ENCODE measurements at regions of chr9 and their contacts with region 1.

Region 1: DNA sequence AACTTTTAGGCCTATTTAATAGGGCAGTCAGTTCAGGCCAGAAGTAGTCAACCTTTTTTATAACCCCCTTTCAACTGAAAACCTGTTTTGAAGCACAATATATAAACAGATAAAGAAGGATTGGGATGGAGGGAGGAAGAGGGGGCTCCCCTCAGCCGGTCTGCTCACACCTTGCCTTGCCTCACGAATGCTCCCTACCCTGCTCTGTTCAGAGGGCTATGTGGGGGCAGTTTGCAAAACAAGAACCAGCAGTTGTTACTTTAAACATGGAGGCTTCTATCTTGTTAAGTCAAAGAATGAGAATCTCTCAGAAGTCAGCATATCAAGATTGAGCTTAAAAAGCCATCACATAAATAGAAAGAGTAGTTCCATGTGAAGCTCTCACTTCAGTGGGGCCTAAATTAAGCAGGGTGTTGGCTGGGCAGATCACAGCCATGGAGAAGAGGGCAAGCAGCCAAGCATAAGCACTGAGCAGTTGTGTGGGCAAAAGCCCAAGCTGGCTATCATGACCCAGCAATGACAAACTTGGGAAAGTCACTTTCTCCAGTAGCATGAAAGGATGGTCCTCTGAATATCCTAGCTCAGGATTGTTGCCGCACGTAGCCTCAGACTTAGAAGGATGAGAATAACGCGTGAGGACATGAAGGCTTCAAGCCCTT is 70.6 kb downstream of the ALDH1A1 start:
- DNase-seq: no peak
- ATAC-seq: no peak
- H3K4me3 ChIP-seq: no peak overlapping the region
- H3K4me3 Mint-ChIP-seq: no peak overlapping the region
- H3K27ac ChIP-seq: no peak overlapping the region
- H3K27ac Mint-ChIP-seq: no peak overlapping the region
- H3K4me1 ChIP-seq: no peaks in the 10 kb centered on the region
- H3K4me1 Mint-ChIP-seq: no peaks in the 10 kb centered on the region
- H3K27me3 ChIP-seq: no peaks in the 10 kb centered on the region
- H3K27me3 Mint-ChIP-seq: no peaks in the 10 kb centered on the region
- CTCF ChIP-seq: no peak

Region 2: DNA sequence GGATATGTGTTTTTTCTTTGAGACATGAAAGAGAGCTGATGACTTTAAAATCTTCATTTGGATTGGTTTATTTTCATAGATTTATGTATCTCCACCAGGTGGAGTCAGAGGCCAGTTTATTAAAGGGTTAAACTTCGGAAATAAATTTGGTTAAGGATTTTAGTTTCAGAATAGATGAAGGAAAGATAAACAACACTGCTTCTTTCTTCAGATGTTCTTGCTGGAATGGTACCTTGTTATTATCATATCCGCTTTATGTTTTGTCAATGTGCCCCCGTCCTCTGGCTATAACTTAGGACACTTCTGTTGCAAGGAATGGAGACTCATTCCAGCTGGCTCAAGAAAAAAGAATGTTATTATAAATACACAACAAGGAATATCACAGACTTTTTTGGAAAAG is 10.6 kb before region 1 on chr9:
- intact Hi-C with region 1: loop called (anchors 1 kb)
- DNase-seq: no peak
- ATAC-seq: no peak
- H3K4me3 ChIP-seq: no peak overlapping the region
- H3K4me3 Mint-ChIP-seq: no peak overlapping the region
- H3K27ac ChIP-seq: no peak overlapping the region
- H3K27ac Mint-ChIP-seq: no peak overlapping the region
- H3K4me1 ChIP-seq: no peaks in the 10 kb centered on the region
- H3K4me1 Mint-ChIP-seq: peaks cover 0 to under 1% of the 10 kb centered on the region in 2 donors
- H3K27me3 ChIP-seq: no peaks in the 10 kb centered on the region
- H3K27me3 Mint-ChIP-seq: peaks cover 6 to 21% of the 10 kb centered on the region in 2 donors
- CTCF ChIP-seq: no peak

Region 3: DNA sequence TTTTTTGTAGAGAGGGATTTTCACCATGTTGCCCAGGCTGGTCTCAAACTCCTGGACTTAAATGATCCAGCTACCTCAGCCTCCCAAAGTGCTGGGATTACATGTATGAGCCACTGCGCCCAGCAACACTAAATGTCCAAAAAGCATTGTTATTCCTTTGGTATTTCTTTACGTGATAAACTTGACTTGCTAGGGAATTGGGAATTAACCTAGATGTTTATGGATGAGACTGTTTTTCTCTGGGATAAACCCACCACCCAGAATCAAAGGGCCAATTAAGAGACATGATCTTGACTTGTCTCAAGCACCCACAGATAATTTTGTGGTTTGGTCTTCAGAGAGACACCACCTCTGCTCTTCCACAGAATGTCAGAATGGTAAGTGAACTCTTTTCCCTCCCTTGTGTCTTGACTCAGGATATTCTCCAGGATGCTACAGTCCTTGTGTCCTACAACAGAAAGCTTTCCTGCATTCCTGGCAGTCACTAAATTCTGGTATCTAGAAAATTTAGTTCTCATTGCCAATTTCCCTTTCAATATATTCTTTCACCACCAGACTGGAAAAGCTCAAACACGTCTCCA is 14.9 kb after region 1 on chr9:
- intact Hi-C with region 1: loop called (anchors 2 kb)
- DNase-seq: no peak
- ATAC-seq: no peak
- H3K4me3 ChIP-seq: no peak overlapping the region
- H3K4me3 Mint-ChIP-seq: no peak overlapping the region
- H3K27ac ChIP-seq: no peak overlapping the region
- H3K27ac Mint-ChIP-seq: no peak overlapping the region
- H3K4me1 ChIP-seq: no peaks in the 10 kb centered on the region
- H3K4me1 Mint-ChIP-seq: no peaks in the 10 kb centered on the region
- H3K27me3 ChIP-seq: no peaks in the 10 kb centered on the region
- H3K27me3 Mint-ChIP-seq: peaks cover 0 to under 1% of the 10 kb centered on the region in 2 donors
- CTCF ChIP-seq: no peak

Region 4: GRCh38 chr9:72912476-72913381 is 30.5 kb after region 1 on chr9:
- intact Hi-C with region 1: no loop called
- DNase-seq: no peak
- ATAC-seq: no peak
- H3K4me3 ChIP-seq: no peak overlapping the region
- H3K4me3 Mint-ChIP-seq: no peak overlapping the region
- H3K27ac ChIP-seq: no peak overlapping the region
- H3K27ac Mint-ChIP-seq: no peak overlapping the region
- H3K4me1 ChIP-seq: no peaks in the 10 kb centered on the region
- H3K4me1 Mint-ChIP-seq: no peaks in the 10 kb centered on the region
- H3K27me3 ChIP-seq: no peaks in the 10 kb centered on the region
- H3K27me3 Mint-ChIP-seq: no peaks in the 10 kb centered on the region
- CTCF ChIP-seq: no peak

Measured in natural killer cell (primary cell).